WTC11 (cell line): ENCODE measurements at regions of chr1 and their contacts with region 1.

Region 1: GRCh38 chr1:167563579-167564246 is 10.2 kb upstream of the CREG1 start:
- DNase-seq: no peak
- ATAC-seq: no peak
- H3K4me3 Mint-ChIP-seq: no peak overlapping the region
- H3K27ac Mint-ChIP-seq: no peak overlapping the region
- H3K4me1 Mint-ChIP-seq: 0 out of 2 replicates have a peak, but pooled peaks cover 3% of the 10 kb centered on the region
- H3K27me3 Mint-ChIP-seq: no peaks in the 10 kb centered on the region
- CTCF ChIP-seq: no peak

Region 2: GRCh38 chr1:167553136-167554027 is 10.3 kb before region 1 on chr1 and contains the start of gene CREG1:
- CTCF ChIA-PET with region 1: interaction called, 12 read pairs
- POLR2A ChIA-PET with region 1: interaction called, 15 read pairs
- DNase-seq: peak; percentile 96
- ATAC-seq: peak; percentile 98
- H3K4me3 Mint-ChIP-seq: peak within 1 kb of the TSS; percentile 87
- H3K27ac Mint-ChIP-seq: no peak within 1 kb of the TSS; the same call in 1 of the 2 replicates
- H3K4me1 Mint-ChIP-seq: peaks cover 26% of the 10 kb centered on the region; the same call in 1 of the 2 replicates
- H3K27me3 Mint-ChIP-seq: peaks cover 10% of the 10 kb centered on the region
- CTCF ChIP-seq: no peak
- total RNA-seq, gene CREG1: 21.0 to 24.7 TPM (median 21.7 TPM) in 3 replicates